K562 (cell line): ENCODE measurements at regions of chr15 and their contacts with region 1.

Region 1: DNA sequence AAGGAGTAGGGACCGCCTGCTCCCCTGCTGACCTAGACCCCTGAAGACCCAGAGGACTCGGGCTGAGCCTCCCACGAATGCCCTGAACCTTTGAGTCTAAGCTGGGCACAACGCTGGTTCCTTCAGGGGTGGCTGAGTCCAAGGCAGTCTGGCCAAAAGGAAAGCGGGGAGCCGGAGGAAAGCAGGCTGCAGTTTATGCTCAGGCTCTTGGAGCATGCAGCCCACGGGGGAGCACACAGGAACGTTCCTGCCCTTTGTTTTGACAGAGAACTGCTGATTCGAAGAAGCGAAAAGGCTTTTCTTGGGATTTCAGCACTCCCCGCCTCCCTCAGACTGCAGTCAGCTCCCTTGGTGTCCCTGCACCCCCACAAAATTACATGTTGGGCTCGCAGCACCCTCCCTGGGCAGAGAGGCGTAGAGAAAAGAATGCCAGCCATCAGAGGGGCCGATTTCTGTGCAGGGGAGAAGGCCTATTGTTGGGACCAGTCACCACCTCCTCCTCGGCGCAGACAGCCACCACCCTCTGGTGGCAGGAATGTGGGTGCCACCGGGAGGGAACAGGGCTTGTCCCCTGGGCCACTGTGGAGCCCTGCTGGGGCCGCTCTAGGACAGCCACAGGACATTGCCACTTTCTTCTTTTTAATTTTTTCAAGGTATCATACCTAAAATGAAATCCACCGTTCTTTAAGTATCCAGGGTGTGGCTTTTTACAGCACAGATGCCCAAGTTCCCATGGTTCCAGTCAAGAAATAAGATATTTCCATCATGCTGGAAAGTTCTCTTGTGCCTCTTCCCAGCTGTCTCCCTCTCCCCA is 72.2 kb downstream of the SMAD6 start:
- DNase-seq: peak; percentile 87 to 93 (median 92)
- ATAC-seq: peak; percentile 99
- H3K4me3 ChIP-seq: no peak overlapping the region
- H3K27ac ChIP-seq: no peak overlapping the region
- H3K4me1 ChIP-seq: peaks cover 16 to 18% of the 10 kb centered on the region in 2 experiments
- H3K27me3 ChIP-seq: no peaks in the 10 kb centered on the region
- CTCF ChIP-seq: peak; percentile 98 to 99 (median 99)
- EP300 ChIP-seq: no peak; the same call in 1 of the 2 replicates
- POLR2A ChIP-seq: no peak
- RAD21 ChIP-seq: peak; percentile 84 to 94

Region 2: DNA sequence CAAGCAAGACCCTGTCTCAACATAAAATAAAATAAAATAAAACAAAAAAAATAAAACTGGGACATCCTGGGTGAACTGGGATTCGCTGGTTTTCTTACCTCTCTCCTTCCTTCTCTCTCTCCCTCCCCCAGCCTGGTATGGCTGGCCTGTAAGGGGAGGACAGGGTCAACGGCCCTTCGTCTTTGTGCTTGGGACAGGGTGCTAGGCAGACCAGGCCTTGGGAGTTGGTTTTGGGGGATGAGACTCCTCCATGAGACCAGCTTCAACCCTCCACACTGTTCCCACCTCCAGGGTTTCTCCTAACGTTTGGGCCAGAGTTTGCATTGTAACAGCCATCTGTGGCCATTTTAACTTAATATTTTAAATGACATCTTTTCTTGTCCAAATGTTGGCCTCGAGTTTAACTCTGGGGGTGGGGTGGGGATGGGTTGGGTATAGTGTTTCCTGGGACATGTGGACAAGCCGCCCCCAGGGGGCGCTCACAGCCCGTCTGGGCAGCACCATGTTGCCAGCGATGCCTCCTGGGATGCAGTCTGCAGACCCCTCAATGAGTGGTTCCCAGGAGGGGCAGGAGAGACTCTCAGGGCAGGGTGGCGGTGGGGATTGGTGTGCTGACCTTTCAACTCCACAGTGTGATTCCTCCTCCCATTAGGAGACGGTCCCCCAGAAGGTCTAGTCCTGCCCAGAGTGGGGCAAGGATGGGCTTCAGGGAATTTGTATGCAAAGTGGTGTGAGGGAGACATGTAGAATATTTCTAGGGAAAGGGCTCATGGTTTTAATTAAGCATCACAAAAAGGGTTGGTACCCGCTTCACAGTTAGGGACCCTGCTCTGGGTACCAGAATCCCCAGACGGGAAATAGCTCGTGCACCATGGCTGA is 170.7 kb before region 1 on chr15:
- CTCF ChIA-PET with region 1: interaction called, 20 read pairs
- POLR2A ChIA-PET with region 1: no interaction called
- in situ Hi-C with region 1: no loop called
- intact Hi-C with region 1: loop called (anchors 1 kb)
- DNase-seq: peak; percentile 75 to 78 (median 76)
- ATAC-seq: peak; percentile 94
- H3K4me3 ChIP-seq: no peak overlapping the region
- H3K27ac ChIP-seq: no peak overlapping the region
- H3K4me1 ChIP-seq: peaks cover 0 to 4% of the 10 kb centered on the region in 2 experiments; a peak in 3 of 5 replicates
- H3K27me3 ChIP-seq: no peaks in the 10 kb centered on the region
- CTCF ChIP-seq: peak; percentile 77 to 79 (median 79)
- EP300 ChIP-seq: no peak
- POLR2A ChIP-seq: no peak
- RAD21 ChIP-seq: peak; percentile 53 to 73

Region 3: DNA sequence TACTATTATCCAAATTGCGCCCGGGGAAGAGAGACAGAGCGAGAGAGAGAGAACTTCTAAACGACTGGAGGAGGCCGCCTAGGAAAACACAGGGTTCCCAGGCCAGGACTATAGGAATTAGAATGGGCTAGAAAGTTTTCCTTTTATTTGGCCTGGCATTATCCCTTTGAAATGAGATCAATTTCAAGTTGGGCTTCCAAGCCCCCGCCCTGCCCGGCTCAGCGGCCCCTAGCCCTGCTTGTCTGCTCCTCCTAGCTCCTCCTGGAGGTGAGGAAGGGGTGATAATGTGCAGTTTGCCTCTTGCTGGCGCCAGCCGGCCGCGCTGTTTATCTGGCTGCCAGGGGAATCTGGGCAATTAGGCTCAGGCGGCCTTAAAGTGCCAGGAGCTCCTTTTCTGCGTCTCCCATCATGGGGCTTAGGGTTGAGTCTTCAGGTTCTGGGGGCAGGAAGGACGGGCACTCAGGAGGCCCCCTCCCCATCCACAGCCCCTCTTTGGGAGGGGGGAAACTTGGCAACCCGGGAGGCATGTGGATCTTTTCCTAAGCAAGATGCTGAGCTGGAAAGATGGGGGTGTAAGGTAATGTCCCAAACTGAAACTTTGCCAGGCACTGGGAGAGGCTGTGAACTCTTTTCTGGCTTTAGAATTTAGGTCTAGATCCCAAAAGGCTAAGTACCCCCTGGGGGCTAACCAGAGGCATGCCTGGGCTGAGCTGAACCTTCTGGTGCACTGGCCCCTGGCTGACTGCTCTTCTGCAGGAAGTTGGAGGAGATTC is 66.7 kb before region 1 on chr15:
- CTCF ChIA-PET with region 1: no interaction called
- POLR2A ChIA-PET with region 1: interaction called, 3 read pairs
- in situ Hi-C with region 1: no loop called
- intact Hi-C with region 1: loop called (anchors 5 kb)
- DNase-seq: no peak
- ATAC-seq: no peak
- H3K4me3 ChIP-seq: no peak overlapping the region
- H3K27ac ChIP-seq: no peak overlapping the region
- H3K4me1 ChIP-seq: peaks cover 0 to 40% of the 10 kb centered on the region in 2 experiments; a peak in 3 of 5 replicates
- H3K27me3 ChIP-seq: no peaks in the 10 kb centered on the region
- CTCF ChIP-seq: no peak
- EP300 ChIP-seq: no peak
- POLR2A ChIP-seq: no peak
- RAD21 ChIP-seq: no peak

Region 4: GRCh38 chr15:66838671-66839239 is 64.5 kb after region 1 on chr15:
- CTCF ChIA-PET with region 1: no interaction called
- POLR2A ChIA-PET with region 1: no interaction called
- in situ Hi-C with region 1: no loop called
- intact Hi-C with region 1: no loop called
- DNase-seq: peak; percentile 49 to 63 (median 56)
- ATAC-seq: peak; percentile 55
- H3K4me3 ChIP-seq: no peak overlapping the region
- H3K27ac ChIP-seq: no peak overlapping the region
- H3K4me1 ChIP-seq: peaks cover 5 to 11% of the 10 kb centered on the region in 2 experiments; a peak in 3 of 5 replicates
- H3K27me3 ChIP-seq: no peaks in the 10 kb centered on the region
- CTCF ChIP-seq: peak; percentile 44 to 74 (median 66); a peak in 5 of 6 replicates
- EP300 ChIP-seq: no peak
- POLR2A ChIP-seq: no peak
- RAD21 ChIP-seq: 0 out of 4 replicates have a peak, but pooled peaks of 1 of the 2 experiments have one; percentile 24

Region 5: GRCh38 chr15:66907826-66908743 is 133.9 kb after region 1 on chr15:
- CTCF ChIA-PET with region 1: interaction called, 16 read pairs
- POLR2A ChIA-PET with region 1: no interaction called
- in situ Hi-C with region 1: no loop called
- intact Hi-C with region 1: no loop called
- DNase-seq: no peak
- ATAC-seq: peak; percentile 60
- H3K4me3 ChIP-seq: no peak overlapping the region
- H3K27ac ChIP-seq: no peak overlapping the region
- H3K4me1 ChIP-seq: peaks cover 0 to 11% of the 10 kb centered on the region in 2 experiments; a peak in 3 of 5 replicates
- H3K27me3 ChIP-seq: peaks cover 24 to 27% of the 10 kb centered on the region in 2 experiments
- CTCF ChIP-seq: no peak
- EP300 ChIP-seq: no peak
- POLR2A ChIP-seq: no peak
- RAD21 ChIP-seq: no peak